Heart right ventricle (tissue), 16 donors: ENCODE measurements at regions of chr5 and their contacts with region 1.

Region 1: DNA sequence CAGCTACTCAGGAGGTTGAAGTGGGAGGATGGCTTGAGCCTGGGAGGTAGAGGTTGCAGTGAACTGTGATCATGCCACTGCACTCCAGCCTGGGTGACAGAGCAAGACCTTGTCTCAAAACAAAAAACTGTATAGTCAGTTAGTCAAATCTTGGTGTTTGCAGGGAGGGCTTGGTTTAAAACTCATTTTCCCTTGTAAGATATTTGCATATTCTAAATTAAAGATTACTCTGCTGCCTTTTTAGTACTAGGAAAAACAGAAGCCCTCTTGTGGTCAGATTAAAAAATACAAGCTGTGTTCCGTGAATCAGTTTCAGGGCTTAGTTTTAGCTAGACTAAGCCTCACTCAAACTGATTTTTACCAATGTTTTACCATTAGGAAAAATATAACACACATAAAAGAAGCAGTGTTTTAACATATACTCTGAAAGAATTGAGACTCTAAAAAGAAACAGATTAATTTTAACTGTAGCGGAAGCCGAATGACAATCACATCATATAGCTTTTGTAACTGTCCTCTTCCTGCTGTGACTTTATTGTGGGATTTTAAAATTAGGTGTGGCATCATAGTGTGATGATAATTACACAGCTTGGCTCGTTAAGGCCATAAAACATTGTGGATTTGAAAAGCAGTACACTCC is 84.9 kb upstream of the BASP1 start:
- DNase-seq: no peak
- ATAC-seq: no peak
- H3K4me3 ChIP-seq: no peak overlapping the region
- H3K27ac ChIP-seq: no peak overlapping the region
- H3K4me1 ChIP-seq: peaks cover 0 to 20% (median 0%) of the 10 kb centered on the region in 9 donors
- H3K27me3 ChIP-seq: peaks cover 0 to 12% (median 0%) of the 10 kb centered on the region in 7 donors
- CTCF ChIP-seq: peak; percentile 56 to 80 (median 73)

Region 2: GRCh38 chr5:16784843-16785791 is 347.4 kb before region 1 on chr5:
- intact Hi-C with region 1: loop called (anchors 2 to 10 kb)
- DNase-seq: no peak
- ATAC-seq: peak in 1 of 8 donors; percentile 22
- H3K4me3 ChIP-seq: no peak overlapping the region
- H3K27ac ChIP-seq: no peak overlapping the region
- H3K4me1 ChIP-seq: peaks cover 0 to 13% (median 0%) of the 10 kb centered on the region in 9 donors
- H3K27me3 ChIP-seq: no peaks in the 10 kb centered on the region
- CTCF ChIP-seq: no peak

Region 3: DNA sequence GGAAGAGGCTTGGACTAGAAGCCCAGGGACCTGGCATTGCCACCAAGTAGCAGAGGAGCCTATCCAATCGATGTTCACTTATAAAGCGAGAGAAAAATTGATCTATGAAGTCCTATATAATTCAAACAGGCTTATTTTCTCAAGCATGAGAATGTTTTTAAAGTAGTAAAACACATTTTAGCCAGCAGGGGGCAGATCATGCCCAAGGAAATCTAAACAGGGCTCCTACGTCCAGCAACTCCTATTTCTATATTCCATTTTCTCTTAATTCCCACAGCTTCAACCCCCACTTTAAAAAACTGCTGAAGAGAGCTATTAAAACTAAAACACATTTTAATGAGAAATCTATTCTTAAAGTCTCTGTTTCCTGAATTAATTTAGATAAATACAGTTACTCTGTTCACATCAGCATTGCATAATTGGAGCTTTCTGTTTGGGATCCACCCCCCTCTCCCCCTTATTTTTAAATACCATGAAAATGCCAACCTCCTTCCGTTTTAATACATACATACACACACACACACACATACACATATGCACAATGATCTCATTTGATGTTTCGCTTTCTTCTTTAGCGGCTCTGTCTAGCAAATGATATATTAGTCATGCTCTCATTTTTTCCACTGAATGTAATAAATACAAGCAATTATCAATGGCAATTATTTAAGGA is 341.4 kb before region 1 on chr5:
- intact Hi-C with region 1: loop called (anchors 2 to 10 kb)
- DNase-seq: peak in 1 of 2 donors; percentile 17
- ATAC-seq: peak in 2 of 8 donors; percentile 17 to 59
- H3K4me3 ChIP-seq: no peak overlapping the region
- H3K27ac ChIP-seq: no peak overlapping the region
- H3K4me1 ChIP-seq: peaks cover 0 to 9% (median 0%) of the 10 kb centered on the region in 9 donors
- H3K27me3 ChIP-seq: no peaks in the 10 kb centered on the region
- CTCF ChIP-seq: peak; percentile 67 to 84 (median 77)

Region 4: GRCh38 chr5:16934123-16934522 is 198.4 kb before region 1 on chr5:
- intact Hi-C with region 1: loop called (anchors 1 to 10 kb)
- DNase-seq: peak; percentile 52 to 61
- ATAC-seq: peak in 5 of 8 donors; percentile 30 to 77 (median 75)
- H3K4me3 ChIP-seq: peak overlapping the region in 9 of 10 donors; percentile 65 to 87 (median 74)
- H3K27ac ChIP-seq: peak overlapping the region in 1 of 10 donors; percentile 77
- H3K4me1 ChIP-seq: peaks cover 0 to 55% (median 18%) of the 10 kb centered on the region in 9 donors
- H3K27me3 ChIP-seq: peaks cover 0 to 69% (median 49%) of the 10 kb centered on the region in 7 donors
- CTCF ChIP-seq: peak; percentile 61 to 86 (median 80)

Region 5: DNA sequence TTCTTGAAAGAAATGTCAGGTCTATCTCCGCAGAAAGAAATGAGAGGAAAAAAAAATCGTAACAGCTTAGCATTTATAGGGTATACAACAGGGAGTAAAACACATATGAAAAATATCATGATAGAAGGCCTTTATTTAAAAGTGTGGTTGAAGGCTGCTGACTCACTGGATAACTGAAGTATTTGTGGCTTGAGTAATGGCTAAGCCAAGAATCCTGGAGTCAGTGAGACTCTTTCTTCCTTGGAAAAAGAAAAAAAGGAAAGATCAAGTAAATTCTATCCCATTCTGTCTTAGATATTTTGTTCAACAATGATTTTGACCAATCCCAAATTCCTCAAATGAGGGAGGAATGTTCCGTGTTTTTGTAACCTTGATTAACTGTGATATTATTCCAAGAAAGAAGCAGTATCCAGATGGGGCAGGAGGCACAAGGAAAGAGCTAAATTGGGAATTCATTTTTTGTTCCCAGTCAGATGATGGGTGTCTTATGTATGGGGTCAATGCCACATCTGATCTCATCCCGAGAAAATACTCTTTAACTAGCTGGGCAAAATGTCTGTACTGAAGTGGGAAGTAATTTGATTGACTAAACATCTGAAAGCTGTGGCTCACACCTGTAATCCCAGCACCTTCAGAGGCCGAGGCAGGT is 132.1 kb before region 1 on chr5:
- intact Hi-C with region 1: loop called in 1 of 10 experiments (anchors 10 kb)
- DNase-seq: no peak
- ATAC-seq: peak in 2 of 8 donors; percentile 35 to 55
- H3K4me3 ChIP-seq: no peak overlapping the region
- H3K27ac ChIP-seq: no peak overlapping the region
- H3K4me1 ChIP-seq: peaks cover 0 to 16% (median 5%) of the 10 kb centered on the region in 9 donors
- H3K27me3 ChIP-seq: no peaks in the 10 kb centered on the region
- CTCF ChIP-seq: no peak

Region 6: GRCh38 chr5:17079562-17079961 is 53.0 kb before region 1 on chr5:
- intact Hi-C with region 1: loop called in 1 of 10 experiments (anchors 5 kb)
- DNase-seq: peak in 1 of 2 donors; percentile 72
- ATAC-seq: peak; percentile 70 to 96 (median 88)
- H3K4me3 ChIP-seq: peak overlapping the region in 2 of 10 donors; percentile 1 to 20
- H3K27ac ChIP-seq: peak overlapping the region in 4 of 10 donors; percentile 1 to 74 (median 46)
- H3K4me1 ChIP-seq: peaks cover 0 to 44% (median 11%) of the 10 kb centered on the region in 9 donors
- H3K27me3 ChIP-seq: no peaks in the 10 kb centered on the region
- CTCF ChIP-seq: no peak